ENCODE measurements at regions of chr6 and their contacts with region 1.

Region 1: DNA sequence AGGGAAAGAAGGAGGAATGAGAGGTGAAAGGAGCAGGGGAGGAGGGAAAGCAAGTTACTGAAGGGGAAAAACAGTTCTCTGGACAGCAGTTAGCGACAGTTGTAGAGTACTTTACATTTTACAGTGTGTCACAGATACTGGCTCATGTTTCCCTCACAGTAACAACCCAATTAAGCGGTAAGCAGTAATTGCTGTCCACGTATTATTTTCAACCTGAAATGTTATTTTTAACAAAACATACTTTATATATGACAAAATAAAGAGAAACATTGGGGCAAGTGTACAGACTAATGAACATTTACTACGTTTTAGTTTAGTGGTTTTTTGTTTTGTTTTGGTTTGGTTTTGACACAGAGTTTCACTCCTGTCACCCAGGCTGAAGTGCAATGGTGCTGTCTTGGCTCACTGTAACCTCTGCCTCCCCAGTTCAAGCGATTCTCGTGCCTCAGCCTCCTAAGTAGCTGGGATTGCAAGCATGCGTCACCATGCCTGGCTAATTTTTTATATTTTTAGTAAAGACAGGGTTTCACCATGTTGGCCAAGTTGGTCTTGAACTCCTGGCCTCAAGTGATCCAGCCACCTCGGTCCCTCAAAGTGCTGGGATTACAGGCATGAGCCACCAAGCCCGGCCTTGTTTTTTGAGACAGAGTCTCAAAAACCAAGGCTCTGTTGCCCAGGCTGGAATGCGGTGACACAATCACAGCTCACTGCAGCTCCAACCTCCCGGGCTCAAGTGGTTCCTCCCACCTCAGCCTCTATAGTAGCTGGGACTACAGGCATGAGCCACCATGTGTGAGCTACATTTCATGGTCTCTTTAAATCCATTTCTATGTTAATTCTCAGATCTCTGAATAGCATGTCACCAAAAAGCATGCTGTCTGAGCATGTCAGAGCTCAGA is 22.6 kb upstream of the BTN3A2 start:
- DNase-seq: peak; percentile 63
- ATAC-seq: peak; percentile 60
- H3K4me3 Mint-ChIP-seq: peak overlapping the region; percentile 73
- H3K27ac Mint-ChIP-seq: peak overlapping the region; percentile 81
- H3K4me1 Mint-ChIP-seq: peaks cover 12% of the 10 kb centered on the region
- H3K27me3 Mint-ChIP-seq: no peaks in the 10 kb centered on the region

Region 2: GRCh38 chr6:26103770-26104456 is 238.4 kb before region 1 on chr6:
- CTCF ChIA-PET with region 1: no interaction called
- POLR2A ChIA-PET with region 1: no interaction called
- intact Hi-C with region 1: no loop called
- DNase-seq: peak; percentile 92
- ATAC-seq: peak; percentile 89
- H3K4me3 Mint-ChIP-seq: peak overlapping the region; percentile 82
- H3K27ac Mint-ChIP-seq: peak overlapping the region; percentile 97
- H3K4me1 Mint-ChIP-seq: peaks cover 16% of the 10 kb centered on the region
- H3K27me3 Mint-ChIP-seq: no peaks in the 10 kb centered on the region

Region 3: DNA sequence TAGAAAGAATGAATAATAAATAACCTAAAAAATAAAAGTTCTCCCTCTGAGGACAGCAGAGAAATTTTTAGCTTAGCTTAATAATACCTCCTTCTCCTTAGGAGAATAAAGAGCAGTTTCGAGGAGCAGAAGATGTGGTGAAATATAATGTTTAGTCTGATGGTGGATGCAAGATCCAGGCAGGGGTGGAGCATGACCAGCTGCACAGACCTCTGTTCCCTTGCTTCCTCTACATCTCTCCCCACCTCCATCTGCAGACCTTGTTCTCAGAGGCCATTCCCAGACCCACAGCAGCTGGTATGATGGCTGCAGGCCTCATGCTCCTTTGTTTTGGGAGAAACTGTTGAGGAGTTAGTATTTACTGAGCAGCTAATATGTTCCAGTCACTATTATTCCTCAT is 24.1 kb after region 1 on chr6:
- CTCF ChIA-PET with region 1: interaction called, 4 read pairs
- POLR2A ChIA-PET with region 1: no interaction called
- intact Hi-C with region 1: loop called in 1 of 2 experiments (anchors 1 kb)
- DNase-seq: no peak
- ATAC-seq: no peak
- H3K4me3 Mint-ChIP-seq: no peak overlapping the region
- H3K27ac Mint-ChIP-seq: peak overlapping the region; percentile 61
- H3K4me1 Mint-ChIP-seq: peaks cover 58% of the 10 kb centered on the region
- H3K27me3 Mint-ChIP-seq: no peaks in the 10 kb centered on the region

Region 4: DNA sequence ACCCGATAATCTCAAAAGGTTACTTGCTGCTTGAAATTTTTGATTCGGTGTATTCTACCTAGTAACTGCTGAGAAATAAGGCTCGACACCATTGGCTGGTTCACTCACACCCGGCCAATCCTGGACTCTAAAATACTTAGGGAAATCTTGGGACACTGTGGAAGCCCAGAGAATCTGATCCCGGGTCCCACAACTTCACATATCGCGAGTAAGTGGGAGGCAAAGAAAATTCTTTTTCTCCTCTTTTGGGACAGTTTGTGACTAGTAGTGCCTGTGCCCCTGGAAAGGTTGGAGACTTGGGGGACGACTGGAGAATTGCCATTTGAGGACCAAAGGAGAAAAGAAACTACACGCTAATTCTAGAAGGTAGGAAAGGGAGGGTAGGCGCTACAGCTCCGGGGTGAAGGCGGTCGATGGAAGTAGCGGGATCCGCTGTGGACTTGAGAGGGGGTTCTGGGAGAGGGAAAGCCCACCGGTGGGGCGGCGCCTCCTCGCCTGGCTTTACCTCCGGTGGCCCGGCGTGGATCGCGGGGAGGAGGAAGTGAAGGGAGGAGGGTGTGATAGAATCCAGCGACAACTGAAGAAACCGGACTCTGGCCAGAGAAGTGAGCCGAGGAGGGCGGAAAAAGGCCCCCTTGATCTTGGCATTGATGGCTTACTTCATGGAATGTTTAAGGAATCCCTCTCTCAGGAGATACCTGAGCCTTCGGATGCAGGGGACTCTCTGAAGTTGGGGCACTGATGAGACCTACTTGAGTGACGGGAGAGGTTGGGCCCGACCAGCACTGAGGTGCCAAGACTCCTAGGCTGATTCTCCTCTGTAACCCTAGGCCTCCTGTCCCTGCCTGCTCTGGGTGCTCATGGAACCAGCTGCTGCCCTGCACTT is 79.1 kb after region 1 on chr6:
- CTCF ChIA-PET with region 1: interaction called, 4 read pairs
- POLR2A ChIA-PET with region 1: no interaction called
- intact Hi-C with region 1: loop called (anchors 1 to 5 kb)
- DNase-seq: peak; percentile 62
- ATAC-seq: peak; percentile 97
- H3K4me3 Mint-ChIP-seq: no peak overlapping the region
- H3K27ac Mint-ChIP-seq: no peak overlapping the region
- H3K4me1 Mint-ChIP-seq: peaks cover 5% of the 10 kb centered on the region
- H3K27me3 Mint-ChIP-seq: no peaks in the 10 kb centered on the region

Region 5: DNA sequence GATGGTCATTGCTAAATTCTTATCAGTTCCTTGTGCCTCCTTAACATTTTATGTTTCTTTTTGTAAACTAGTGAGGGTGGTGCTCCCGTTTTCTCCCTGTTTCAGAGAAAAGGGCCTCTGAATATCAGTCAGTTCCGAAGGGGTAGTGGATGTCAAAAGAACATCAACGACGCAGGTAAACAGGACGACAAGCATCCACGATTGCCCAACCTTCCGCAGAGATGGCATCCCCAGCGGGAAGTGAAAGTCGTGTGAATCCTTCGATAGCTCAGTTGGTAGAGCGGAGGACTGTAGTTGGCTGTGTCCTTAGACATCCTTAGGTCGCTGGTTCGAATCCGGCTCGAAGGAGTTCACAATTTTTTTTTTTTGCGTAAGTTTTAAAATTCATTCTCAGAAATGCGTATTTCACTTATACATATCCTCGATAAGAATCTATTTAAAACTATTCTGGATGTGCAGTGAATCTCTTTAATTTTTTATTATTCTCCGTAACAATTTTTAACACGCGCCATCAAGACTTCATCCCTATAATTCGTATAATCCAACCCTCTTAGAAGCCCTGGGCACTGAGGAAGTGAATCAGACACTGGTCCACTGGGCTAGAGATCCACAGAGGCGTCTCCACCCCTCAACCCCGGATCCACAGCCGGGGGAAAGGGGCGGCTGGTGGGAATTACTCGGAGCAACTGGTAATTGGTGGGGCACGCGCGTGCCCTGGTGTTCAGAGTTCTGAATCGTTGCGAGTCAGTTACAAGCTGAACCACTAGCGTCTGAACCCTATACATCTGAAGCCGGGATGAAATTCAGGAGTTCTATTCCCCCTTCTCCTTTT is 226.5 kb after region 1 on chr6:
- CTCF ChIA-PET with region 1: interaction called, 5 read pairs
- POLR2A ChIA-PET with region 1: no interaction called
- intact Hi-C with region 1: loop called (anchors 1 kb)
- DNase-seq: peak; percentile 97
- ATAC-seq: peak; percentile 74
- H3K4me3 Mint-ChIP-seq: peak overlapping the region; percentile 85
- H3K27ac Mint-ChIP-seq: peak overlapping the region; percentile 81
- H3K4me1 Mint-ChIP-seq: peaks cover 29% of the 10 kb centered on the region
- H3K27me3 Mint-ChIP-seq: peaks cover 2% of the 10 kb centered on the region